Psoas muscle (tissue), 8 donors: ENCODE measurements at regions of chr11 and their contacts with region 1.

Region 1: GRCh38 chr11:1309498-1310317 is at the start of gene TOLLIP:
- DNase-seq: peak; percentile 97 to 99
- ATAC-seq: peak; percentile 93 to 96 (median 94)
- H3K4me3 ChIP-seq: peak within 1 kb of the TSS; percentile 81
- H3K27ac ChIP-seq: peak within 1 kb of the TSS; percentile 97
- H3K4me1 ChIP-seq: peaks cover 33% of the 10 kb centered on the region
- H3K27me3 ChIP-seq: no peaks in the 10 kb centered on the region
- CTCF ChIP-seq: peak; percentile 7
- total RNA-seq, gene TOLLIP: 45.0 to 74.6 (median 65.6) TPM

Region 2: DNA sequence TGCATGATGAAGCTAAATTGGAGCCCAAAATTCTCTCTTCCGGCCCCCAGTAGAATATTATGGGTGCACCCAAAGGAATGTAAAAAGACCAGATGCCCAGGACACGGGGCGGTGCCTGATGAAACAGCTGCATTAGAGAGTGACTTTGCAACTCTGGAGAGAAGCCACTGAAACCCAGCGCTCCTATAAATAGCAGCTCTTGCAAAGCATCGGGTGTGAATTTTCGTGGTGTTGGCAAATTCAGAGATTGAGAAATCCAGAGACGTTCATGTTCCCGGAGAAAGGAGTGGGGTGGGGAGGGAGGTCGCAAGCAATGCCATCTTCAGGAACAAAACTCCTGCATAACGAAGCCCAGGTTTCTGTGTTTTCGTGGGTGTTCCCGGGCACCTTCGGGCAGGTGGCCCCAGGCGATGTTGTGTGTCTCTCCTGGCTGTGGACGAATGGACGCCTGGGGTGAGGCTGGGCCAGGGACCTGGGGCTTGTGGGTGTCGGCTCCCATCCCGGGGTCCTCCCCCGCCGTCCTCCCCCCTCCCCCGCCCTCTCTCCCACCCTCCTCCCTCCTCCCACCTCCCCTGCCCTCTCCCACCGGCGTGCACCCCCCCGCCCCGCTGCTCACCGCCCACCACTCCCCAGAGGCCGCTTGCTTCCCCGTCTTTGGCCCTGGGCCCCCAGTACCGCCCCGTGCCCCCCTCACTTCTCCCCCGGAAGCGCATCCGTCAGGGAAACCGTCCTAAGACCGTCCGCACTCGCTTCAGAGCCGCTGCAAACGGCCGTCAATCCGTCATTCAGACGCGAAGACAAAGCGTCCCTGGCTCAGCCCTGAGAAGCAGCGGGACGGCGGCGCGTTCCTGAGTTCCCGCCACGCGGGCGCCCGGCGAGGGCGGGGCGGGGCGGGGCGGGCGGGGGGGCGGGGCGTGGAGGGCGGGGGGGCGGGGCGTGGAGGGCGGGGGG is 26.4 kb after region 1 on chr11:
- intact Hi-C with region 1: loop called (anchors 1 to 2 kb)
- DNase-seq: peak; percentile 84 to 92
- ATAC-seq: peak; percentile 85 to 89 (median 87)
- H3K4me3 ChIP-seq: peak overlapping the region; percentile 64
- H3K27ac ChIP-seq: peak overlapping the region; percentile 91
- H3K4me1 ChIP-seq: peaks cover 10% of the 10 kb centered on the region
- H3K27me3 ChIP-seq: no peaks in the 10 kb centered on the region
- CTCF ChIP-seq: no peak

Region 3: DNA sequence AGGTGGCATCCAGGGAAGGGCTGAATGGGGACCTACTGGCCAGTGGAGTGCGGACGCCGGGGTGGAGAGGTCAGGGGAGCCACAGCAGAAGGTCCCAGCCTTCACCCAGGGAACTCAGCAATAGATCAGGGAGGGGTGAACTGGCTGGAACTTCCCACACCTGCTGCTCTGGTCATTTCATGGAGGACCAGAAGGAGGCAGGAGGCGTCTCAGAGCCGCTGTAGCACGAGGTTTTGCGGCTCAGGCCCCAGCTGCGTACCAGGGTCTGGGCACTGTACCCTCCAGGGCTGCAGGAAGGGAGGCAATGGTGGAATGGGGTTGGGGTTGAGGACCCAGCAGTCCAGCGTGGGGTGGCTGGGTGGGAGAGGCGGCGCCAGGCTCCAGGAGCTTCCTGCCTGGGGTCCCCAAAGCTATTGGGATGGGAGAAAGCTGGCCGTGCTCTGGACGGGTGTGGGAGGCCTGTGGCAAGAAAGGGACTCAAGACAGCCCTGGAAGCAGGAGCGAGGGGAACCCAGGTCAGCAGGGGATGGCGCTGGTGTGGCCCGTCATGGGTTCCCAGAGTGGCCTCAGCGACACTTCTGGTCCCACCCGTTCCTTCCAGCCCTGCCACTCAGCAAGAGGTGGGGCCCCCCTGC is 59.8 kb after region 1 on chr11:
- intact Hi-C with region 1: no loop called
- DNase-seq: no peak
- ATAC-seq: no peak
- H3K4me3 ChIP-seq: no peak overlapping the region
- H3K27ac ChIP-seq: no peak overlapping the region
- H3K4me1 ChIP-seq: no peaks in the 10 kb centered on the region
- H3K27me3 ChIP-seq: peaks cover 0 to 46% (median 4%) of the 10 kb centered on the region in 3 donors
- CTCF ChIP-seq: no peak